ENCODE measurements at regions of chr20 and their contacts with region 1.

Region 1: DNA sequence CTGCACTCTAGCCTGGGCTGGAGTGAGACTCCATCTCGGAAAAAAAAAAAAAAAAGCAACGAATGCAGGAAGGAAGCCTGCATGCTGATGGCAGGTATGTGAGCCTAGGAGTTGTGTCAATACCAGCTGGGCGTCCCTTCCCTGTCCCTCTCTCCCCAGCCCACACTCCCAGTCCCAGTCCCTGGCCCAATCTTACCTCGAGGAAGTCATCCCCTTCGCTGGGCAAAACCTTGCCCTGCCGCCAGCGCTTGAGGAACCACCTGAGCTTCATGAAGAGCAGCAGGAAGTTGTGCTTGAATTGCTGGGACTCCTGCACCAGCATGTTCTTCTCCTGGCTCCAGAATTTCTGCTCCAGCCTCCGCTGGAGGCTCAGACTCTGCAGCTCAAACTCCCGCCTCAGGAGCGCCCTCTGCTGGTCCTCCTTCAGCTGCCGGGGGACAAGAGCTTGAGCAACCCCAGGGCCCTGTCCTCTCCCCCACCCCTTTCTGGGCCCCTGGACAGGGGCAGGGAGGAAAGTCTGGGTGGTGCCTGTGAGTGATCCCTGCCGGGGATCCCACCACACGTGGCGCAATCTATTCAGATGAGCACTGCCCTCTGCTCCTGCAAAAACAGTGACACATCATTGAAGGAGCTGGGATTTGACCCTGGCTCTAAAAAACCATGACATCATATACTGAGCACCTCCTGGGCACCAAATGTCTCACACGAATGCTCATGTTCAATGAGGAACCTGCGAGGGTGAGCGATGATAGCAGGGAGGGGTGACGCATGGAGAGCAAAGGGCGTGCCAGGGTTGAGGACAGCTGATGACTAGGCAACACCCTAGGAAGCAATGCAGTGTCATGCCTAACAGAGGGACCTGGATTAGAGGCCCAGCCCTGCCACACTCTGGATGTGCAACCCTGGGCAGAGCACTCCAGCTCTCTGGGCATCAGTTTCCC is 35.0 kb upstream of the DSN1 start:
- DNase-seq: peak; percentile 90
- ATAC-seq: peak; percentile 78
- H3K4me3 Mint-ChIP-seq: no peak overlapping the region
- H3K27ac Mint-ChIP-seq: no peak overlapping the region
- H3K4me1 Mint-ChIP-seq: no peaks in the 10 kb centered on the region
- H3K27me3 Mint-ChIP-seq: no peaks in the 10 kb centered on the region

Region 2: GRCh38 chr20:36819659-36820058 is 11.1 kb after region 1 on chr20:
- CTCF ChIA-PET with region 1: interaction called, 13 read pairs
- POLR2A ChIA-PET with region 1: no interaction called
- intact Hi-C with region 1: no loop called
- DNase-seq: no peak
- ATAC-seq: no peak
- H3K4me3 Mint-ChIP-seq: no peak overlapping the region
- H3K27ac Mint-ChIP-seq: no peak overlapping the region
- H3K4me1 Mint-ChIP-seq: no peaks in the 10 kb centered on the region
- H3K27me3 Mint-ChIP-seq: no peaks in the 10 kb centered on the region

Region 3: DNA sequence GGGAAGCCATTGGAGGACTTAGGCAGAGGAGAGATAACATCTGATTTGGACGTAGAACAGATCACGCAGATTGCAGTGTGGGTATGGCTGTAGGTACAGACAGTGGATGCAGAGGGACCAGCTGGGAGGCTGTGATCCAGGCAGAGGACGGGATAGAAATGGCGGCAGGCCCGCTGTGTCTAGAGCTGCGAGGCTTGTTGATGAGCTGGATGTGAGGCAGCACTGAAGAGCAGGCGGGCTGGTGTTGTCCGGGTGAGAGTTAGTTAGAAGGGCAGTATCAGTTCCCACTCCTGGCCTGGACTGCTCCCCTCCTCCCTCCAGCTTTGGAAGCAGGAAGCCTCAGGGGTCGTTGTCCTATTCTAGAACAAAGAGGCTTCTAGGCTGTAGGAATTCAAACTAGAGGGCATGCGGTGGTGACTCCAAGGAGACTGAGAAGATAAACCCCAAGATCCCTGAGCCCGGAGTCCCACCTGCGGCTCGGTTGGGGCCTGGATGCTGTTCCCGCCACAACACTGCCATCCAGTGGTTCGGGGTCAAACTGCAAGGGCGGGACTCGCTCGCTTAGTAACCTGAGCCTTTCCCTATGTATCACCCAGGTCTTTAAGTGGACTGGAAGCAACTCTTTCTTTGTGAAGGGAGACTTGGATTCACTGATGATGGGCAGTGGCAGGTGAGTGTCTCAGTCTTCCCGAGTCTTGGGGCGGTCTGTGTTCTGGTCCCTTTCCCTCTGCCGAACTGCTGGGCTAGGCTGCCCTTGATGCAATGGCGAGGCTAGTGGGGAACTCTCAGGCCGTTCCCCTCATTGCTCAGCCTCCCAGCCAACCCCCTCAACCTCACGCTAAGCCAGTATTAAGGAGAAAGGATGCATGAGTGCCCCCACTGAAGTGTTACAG is 78.5 kb after region 1 on chr20:
- CTCF ChIA-PET with region 1: interaction called, 7 read pairs
- POLR2A ChIA-PET with region 1: no interaction called
- intact Hi-C with region 1: loop called in 1 of 2 experiments (anchors 5 kb)
- DNase-seq: peak; percentile 92
- ATAC-seq: peak; percentile 97
- H3K4me3 Mint-ChIP-seq: no peak overlapping the region
- H3K27ac Mint-ChIP-seq: peak overlapping the region; percentile 9
- H3K4me1 Mint-ChIP-seq: peaks cover 14% of the 10 kb centered on the region
- H3K27me3 Mint-ChIP-seq: no peaks in the 10 kb centered on the region